ENCODE measurements at regions of chr11 and their contacts with region 1.

Region 1: DNA sequence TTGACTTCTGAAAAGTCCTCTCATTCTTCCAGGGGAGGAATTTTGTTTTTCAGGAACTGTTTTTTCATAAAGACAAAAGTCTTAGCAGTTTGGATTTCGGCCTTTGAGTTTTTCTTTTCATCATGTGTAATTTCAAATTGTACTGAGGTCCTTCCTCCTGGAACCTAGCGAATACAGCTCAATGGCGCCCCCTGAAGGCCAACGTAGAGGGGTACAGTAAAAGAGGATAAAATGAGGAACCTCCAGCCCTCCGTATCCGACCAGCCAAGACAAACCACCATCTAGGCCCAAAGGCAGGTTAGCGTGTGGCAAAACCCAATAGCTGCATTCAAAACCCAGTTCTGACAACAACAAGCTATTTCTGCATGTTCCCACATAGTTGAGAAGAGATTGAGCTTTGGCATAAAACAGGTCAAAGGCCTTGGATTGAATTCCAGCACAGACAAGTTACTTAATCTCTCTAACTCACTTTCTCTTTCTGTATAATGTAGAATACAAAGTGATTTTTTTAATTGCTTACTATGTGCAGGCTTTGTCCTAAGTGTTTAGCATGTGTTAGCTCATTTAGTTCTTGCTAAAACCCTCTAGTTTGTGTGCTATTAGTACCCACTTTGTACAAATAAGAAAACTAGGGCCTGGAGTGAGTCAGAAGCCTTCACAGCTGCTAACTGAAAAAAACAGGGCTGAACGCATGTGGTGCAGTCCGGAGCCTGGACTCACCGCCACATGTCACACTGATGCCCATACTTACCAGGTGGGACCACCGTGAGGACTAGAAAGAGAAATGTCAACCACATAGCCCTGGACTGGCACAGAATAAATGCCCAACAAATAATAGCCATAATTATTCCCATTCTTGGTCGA is 43.2 kb upstream of the ETS1 start:
- DNase-seq: peak; percentile 81
- H3K4me3 Mint-ChIP-seq: peak overlapping the region; percentile 76
- H3K27ac Mint-ChIP-seq: peak overlapping the region; percentile 96
- H3K4me1 Mint-ChIP-seq: peaks cover 76% of the 10 kb centered on the region
- H3K27me3 Mint-ChIP-seq: peaks cover 4% of the 10 kb centered on the region

Region 2: DNA sequence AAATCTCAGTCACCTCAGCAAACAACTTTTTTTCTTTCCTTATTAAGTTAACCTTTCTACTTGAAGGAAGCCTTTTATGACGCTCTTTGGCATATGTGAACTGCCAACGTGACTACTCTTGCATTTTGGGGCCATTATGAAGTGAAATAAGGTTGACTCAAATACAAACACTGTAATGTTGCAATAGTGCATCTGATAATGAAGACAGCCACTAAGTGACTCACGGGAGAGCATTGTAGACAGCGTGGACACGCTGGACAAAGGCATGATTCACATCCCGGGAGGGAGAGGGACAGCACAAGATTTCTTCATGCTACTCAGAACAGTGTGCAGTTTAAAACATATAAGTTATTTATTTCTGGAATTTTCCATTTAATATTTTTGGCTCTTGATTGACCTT is 604.0 kb before region 1 on chr11:
- intact Hi-C with region 1: loop called (anchors 1 kb)
- DNase-seq: no peak
- H3K4me3 Mint-ChIP-seq: no peak overlapping the region
- H3K27ac Mint-ChIP-seq: no peak overlapping the region
- H3K4me1 Mint-ChIP-seq: peaks cover 4% of the 10 kb centered on the region
- H3K27me3 Mint-ChIP-seq: peaks cover 42% of the 10 kb centered on the region

Region 3: GRCh38 chr11:128172046-128172878 is 458.3 kb before region 1 on chr11:
- intact Hi-C with region 1: loop called (anchors 1 kb)
- DNase-seq: peak; percentile 75
- H3K4me3 Mint-ChIP-seq: no peak overlapping the region
- H3K27ac Mint-ChIP-seq: peak overlapping the region; percentile 25
- H3K4me1 Mint-ChIP-seq: peaks cover 25% of the 10 kb centered on the region
- H3K27me3 Mint-ChIP-seq: no peaks in the 10 kb centered on the region

Region 4: DNA sequence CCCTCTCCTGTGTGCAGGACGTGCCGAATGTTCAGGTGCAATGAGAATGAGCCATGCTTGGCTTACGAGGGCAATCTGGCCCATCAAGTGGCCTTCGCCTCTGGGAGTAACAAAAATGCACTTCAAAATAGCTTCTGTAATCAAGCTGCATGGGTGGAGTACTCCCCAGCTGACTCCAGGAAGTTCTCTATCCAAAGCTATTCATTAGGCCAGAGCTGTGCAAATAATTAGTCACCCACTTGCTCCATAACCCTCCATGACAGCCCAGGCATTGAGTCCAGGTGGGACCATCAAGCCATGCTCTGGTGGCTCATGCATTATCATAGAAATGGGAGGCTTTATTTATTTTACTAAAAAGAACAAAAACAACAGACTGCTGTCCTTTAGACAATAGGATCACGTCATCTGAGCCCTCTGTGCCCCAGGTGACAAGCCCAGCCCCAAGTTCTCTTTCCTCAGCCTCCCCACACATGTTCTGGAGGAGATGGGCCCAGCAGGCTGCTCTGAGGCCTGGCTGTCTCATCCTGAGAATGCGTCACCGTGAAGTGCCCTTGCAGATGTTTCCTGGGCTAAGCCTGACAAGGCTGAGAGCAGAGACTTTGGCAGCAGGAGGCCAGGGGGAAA is 288.0 kb before region 1 on chr11:
- intact Hi-C with region 1: loop called (anchors 1 kb)
- DNase-seq: peak; percentile 70
- H3K4me3 Mint-ChIP-seq: peak overlapping the region; percentile 76
- H3K27ac Mint-ChIP-seq: peak overlapping the region; percentile 85
- H3K4me1 Mint-ChIP-seq: peaks cover 92% of the 10 kb centered on the region
- H3K27me3 Mint-ChIP-seq: no peaks in the 10 kb centered on the region

Region 5: GRCh38 chr11:128494418-128495332 is 135.9 kb before region 1 on chr11:
- intact Hi-C with region 1: loop called (anchors 1 kb)
- DNase-seq: no peak
- H3K4me3 Mint-ChIP-seq: peak overlapping the region; percentile 74
- H3K27ac Mint-ChIP-seq: peak overlapping the region; percentile 98
- H3K4me1 Mint-ChIP-seq: peaks cover 98% of the 10 kb centered on the region
- H3K27me3 Mint-ChIP-seq: no peaks in the 10 kb centered on the region

Region 6: DNA sequence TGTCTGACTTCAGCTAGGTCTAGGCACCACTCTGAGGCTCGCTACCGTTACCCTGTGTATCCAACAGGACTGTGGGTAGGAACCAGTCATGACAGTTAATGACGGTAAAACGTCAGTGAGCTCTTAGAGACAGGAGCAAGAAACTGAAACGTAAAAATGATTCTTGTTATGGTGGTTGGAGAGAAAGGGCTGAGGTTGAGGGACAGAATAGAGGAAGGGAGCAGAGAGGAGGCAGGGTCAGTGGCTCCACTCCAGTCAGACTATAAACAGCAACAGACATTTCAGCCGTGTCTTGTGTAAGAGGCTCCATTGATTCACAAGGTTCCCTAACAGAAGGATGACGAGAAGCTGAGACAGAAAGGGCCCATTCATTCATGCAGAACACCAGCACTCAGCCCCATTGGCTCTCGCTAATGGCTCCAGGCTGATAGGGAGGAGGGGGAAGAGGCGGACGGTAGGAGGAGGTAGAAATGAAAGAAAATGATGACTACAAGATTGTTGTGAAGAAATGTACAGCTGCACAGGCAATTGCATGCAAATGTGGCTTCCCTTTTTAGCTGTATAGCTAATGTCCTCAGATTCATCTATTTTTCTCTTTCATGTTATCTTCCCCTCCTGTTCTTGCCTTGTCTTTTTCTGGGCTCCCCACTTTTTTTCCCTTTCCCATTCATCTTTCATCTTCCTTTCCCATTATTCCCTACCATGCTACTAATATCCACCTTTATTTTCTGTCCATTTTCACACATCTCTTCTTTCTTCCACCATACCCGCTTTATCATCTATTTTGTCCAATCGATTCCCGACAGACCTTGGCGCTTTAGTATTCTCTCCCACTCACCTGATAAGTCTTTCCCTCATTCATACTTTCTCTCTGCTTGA is 77.6 kb before region 1 on chr11:
- intact Hi-C with region 1: loop called (anchors 1 kb)
- DNase-seq: no peak
- H3K4me3 Mint-ChIP-seq: peak overlapping the region; percentile 0
- H3K27ac Mint-ChIP-seq: peak overlapping the region; percentile 53
- H3K4me1 Mint-ChIP-seq: peaks cover 60% of the 10 kb centered on the region
- H3K27me3 Mint-ChIP-seq: no peaks in the 10 kb centered on the region

Region 7: GRCh38 chr11:128616161-128616560 is 14.4 kb before region 1 on chr11:
- intact Hi-C with region 1: no loop called
- DNase-seq: no peak
- H3K4me3 Mint-ChIP-seq: no peak overlapping the region
- H3K27ac Mint-ChIP-seq: no peak overlapping the region
- H3K4me1 Mint-ChIP-seq: peaks cover 35% of the 10 kb centered on the region
- H3K27me3 Mint-ChIP-seq: peaks cover 2% of the 10 kb centered on the region

Region 8: DNA sequence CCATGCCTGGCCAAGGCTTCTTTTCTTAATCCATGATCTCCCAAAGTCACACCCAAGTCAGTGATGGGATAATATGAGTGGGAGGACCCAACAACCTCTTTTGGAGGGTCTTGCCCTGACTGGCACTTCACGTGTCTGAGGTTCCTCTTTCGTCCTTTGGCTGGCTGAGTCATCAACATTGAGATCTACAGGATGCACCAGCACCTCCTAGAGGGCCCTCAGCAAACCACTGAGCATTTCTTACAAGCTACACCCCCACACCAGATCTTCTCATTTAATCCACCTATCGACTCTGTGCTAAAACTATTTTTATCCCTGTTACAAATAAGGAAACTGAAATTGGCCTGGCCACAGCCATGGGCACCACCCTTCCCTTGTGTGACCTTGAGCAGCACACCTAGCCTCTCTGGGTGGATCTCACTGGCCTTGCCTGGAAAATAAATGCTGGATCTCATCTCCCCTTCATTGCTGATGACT is 126.7 kb after region 1 on chr11:
- intact Hi-C with region 1: loop called (anchors 1 kb)
- DNase-seq: peak; percentile 55
- H3K4me3 Mint-ChIP-seq: peak overlapping the region; percentile 63
- H3K27ac Mint-ChIP-seq: peak overlapping the region; percentile 95
- H3K4me1 Mint-ChIP-seq: peaks cover 68% of the 10 kb centered on the region
- H3K27me3 Mint-ChIP-seq: no peaks in the 10 kb centered on the region